HepG2 (cell line): ENCODE measurements at regions of chr3 and their contacts with region 1.

Region 1: GRCh38 chr3:196969660-196970546 is 1.3 kb upstream of the PIGZ start:
- DNase-seq: no peak
- ATAC-seq: peak; percentile 86
- H3K4me3 ChIP-seq: peak overlapping the region; percentile 59 to 82 (median 78); a peak in 5 of 6 replicates
- H3K27ac ChIP-seq: peak overlapping the region; percentile 79
- H3K4me1 ChIP-seq: peaks cover 56% of the 10 kb centered on the region
- H3K27me3 ChIP-seq: no peaks in the 10 kb centered on the region
- CTCF ChIP-seq: peak; percentile 71; the same call in 1 of the 2 replicates
- EP300 ChIP-seq: no peak
- POLR2A ChIP-seq: no peak
- RAD21 ChIP-seq: peak; percentile 99

Region 2: GRCh38 chr3:196837819-196838420 is 132.0 kb before region 1 on chr3:
- CTCF ChIA-PET with region 1: interaction called, 10 read pairs
- POLR2A ChIA-PET with region 1: interaction called, 4 read pairs
- in situ Hi-C with region 1: no loop called
- intact Hi-C with region 1: loop called (anchors 1 kb)
- DNase-seq: peak; percentile 72
- ATAC-seq: peak; percentile 78
- H3K4me3 ChIP-seq: no peak overlapping the region
- H3K27ac ChIP-seq: peak overlapping the region; percentile 39
- H3K4me1 ChIP-seq: peaks cover 58% of the 10 kb centered on the region
- H3K27me3 ChIP-seq: no peaks in the 10 kb centered on the region
- CTCF ChIP-seq: peak; percentile 87
- EP300 ChIP-seq: no peak
- POLR2A ChIP-seq: no peak
- RAD21 ChIP-seq: peak; percentile 67; the same call in 1 of the 2 replicates

Region 3: DNA sequence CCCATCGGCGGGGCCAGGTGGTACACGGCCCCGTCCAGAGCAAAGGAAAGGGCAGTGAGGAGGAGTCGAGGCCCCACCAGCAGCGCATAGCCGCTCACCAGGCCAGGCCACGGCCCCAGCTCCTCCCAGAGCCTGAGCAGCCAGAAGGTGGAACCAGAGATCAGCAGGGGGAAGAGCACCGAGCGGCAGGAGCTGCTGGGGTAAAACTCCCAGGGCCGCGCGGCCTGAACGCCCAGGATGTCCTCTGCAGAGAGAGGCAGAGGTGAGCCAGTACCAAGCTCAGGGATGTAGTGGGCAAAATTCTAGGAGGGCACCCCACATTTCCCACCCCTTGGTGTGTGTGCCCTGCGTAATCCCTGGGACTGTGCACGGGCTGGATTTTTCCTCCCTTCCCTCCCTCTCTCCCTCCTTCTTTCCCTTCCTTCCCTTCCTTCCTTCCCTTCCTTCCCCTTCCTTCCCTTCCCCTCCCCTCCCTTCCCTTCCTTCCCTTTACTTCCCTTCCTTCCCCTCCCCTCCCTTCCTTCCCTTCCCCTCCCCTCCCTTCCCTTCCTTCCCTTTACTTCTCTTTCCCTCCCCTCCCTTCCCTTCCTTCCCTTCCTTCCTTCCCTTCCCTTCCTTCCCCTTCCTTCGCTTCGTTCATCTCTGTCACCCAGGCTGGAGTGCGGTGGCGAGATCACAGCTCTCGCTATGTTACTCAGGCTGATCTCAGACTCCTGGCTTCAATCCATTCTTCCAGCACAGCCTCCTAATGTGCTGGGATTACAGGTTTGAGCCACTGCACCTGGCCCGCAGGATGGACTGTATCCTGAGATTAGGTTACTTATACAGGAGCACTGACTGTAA is 21.2 kb before region 1 on chr3:
- CTCF ChIA-PET with region 1: interaction called, 15 read pairs
- POLR2A ChIA-PET with region 1: no interaction called
- in situ Hi-C with region 1: no loop called
- intact Hi-C with region 1: loop called (anchors 2 kb)
- DNase-seq: peak; percentile 63
- ATAC-seq: peak; percentile 90
- H3K4me3 ChIP-seq: peak overlapping the region in 2 of 3 experiments; percentile 11 to 44; a peak in 3 of 6 replicates
- H3K27ac ChIP-seq: peak overlapping the region; percentile 41
- H3K4me1 ChIP-seq: peaks cover 95% of the 10 kb centered on the region
- H3K27me3 ChIP-seq: no peaks in the 10 kb centered on the region; a peak in 1 of 5 replicates
- CTCF ChIP-seq: peak; percentile 91
- EP300 ChIP-seq: no peak
- POLR2A ChIP-seq: peak in 1 of 2 experiments; percentile 20; a peak in 1 of 4 replicates
- RAD21 ChIP-seq: peak; percentile 85

Region 4: GRCh38 chr3:197186887-197187588 is 217.1 kb after region 1 on chr3:
- CTCF ChIA-PET with region 1: no interaction called
- POLR2A ChIA-PET with region 1: no interaction called
- in situ Hi-C with region 1: no loop called
- intact Hi-C with region 1: loop called (anchors 10 kb)
- DNase-seq: peak; percentile 63
- ATAC-seq: peak; percentile 87
- H3K4me3 ChIP-seq: no peak overlapping the region
- H3K27ac ChIP-seq: no peak overlapping the region
- H3K4me1 ChIP-seq: no peaks in the 10 kb centered on the region
- H3K27me3 ChIP-seq: no peaks in the 10 kb centered on the region
- CTCF ChIP-seq: peak; percentile 80
- EP300 ChIP-seq: no peak
- POLR2A ChIP-seq: no peak
- RAD21 ChIP-seq: peak; percentile 9; the same call in 1 of the 2 replicates